ENCODE measurements at regions of chr3 and their contacts with region 1.

Region 1: GRCh38 chr3:112437146-112438022 is 61.9 kb downstream of the BTLA start:
- DNase-seq: no peak
- H3K4me3 ChIP-seq: no peak overlapping the region
- H3K27ac ChIP-seq: no peak overlapping the region
- H3K4me1 ChIP-seq: no peaks in the 10 kb centered on the region
- H3K27me3 ChIP-seq: no peaks in the 10 kb centered on the region
- CTCF ChIP-seq: no peak

Region 2: DNA sequence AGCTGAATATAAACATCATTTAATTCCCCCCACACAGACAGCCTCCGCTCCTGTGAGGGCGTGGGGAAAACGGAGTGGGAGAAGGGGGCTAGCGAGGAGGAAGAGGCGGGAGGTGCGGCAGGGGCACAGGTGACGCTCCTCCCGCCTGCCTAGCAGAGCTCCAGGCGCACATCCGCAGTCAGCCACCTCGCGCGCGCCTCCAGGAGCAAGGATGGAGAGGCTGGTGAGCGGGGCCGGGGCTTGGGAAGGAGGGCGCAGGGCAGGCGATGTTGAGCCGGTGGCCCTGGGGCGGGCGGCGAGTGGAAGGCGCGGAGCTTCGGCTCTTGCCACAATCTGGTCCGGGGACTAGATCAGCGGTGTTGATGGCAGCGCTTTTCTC is 104.4 kb before region 1 on chr3 and contains the start of gene CD200:
- intact Hi-C with region 1: loop called (anchors 10 kb)
- DNase-seq: peak; percentile 76
- H3K4me3 ChIP-seq: peak within 1 kb of the TSS; percentile 53
- H3K27ac ChIP-seq: peak within 1 kb of the TSS; percentile 53
- H3K4me1 ChIP-seq: no peaks in the 10 kb centered on the region
- H3K27me3 ChIP-seq: no peaks in the 10 kb centered on the region
- CTCF ChIP-seq: no peak
- total RNA-seq, gene CD200: 7.1 to 7.6 TPM

Region 3: GRCh38 chr3:112350181-112350825 is 87.1 kb before region 1 on chr3:
- intact Hi-C with region 1: no loop called
- DNase-seq: no peak
- H3K4me3 ChIP-seq: no peak overlapping the region
- H3K27ac ChIP-seq: no peak overlapping the region
- H3K4me1 ChIP-seq: no peaks in the 10 kb centered on the region
- H3K27me3 ChIP-seq: no peaks in the 10 kb centered on the region
- CTCF ChIP-seq: no peak

Region 4: GRCh38 chr3:112794622-112795172 is 357.3 kb after region 1 on chr3:
- intact Hi-C with region 1: no loop called
- DNase-seq: no peak
- H3K4me3 ChIP-seq: no peak overlapping the region
- H3K27ac ChIP-seq: no peak overlapping the region
- H3K4me1 ChIP-seq: no peaks in the 10 kb centered on the region
- H3K27me3 ChIP-seq: no peaks in the 10 kb centered on the region
- CTCF ChIP-seq: no peak

Measured in colonic mucosa (tissue), 4 donors.